Spleen (tissue), 13 donors: ENCODE measurements at regions of chr19 and their contacts with region 1.

Region 1: GRCh38 chr19:1189419-1189818 is 15.4 kb upstream of the SBNO2 start:
- DNase-seq: no peak
- H3K4me3 ChIP-seq: no peak overlapping the region
- H3K27ac ChIP-seq: peak overlapping the region in 3 of 8 donors; percentile 10 to 50 (median 37)
- H3K4me1 ChIP-seq: peaks cover 0 to 55% (median 20%) of the 10 kb centered on the region in 6 donors
- H3K27me3 ChIP-seq: no peaks in the 10 kb centered on the region
- CTCF ChIP-seq: no peak
- POLR2A ChIP-seq: no peak

Region 2: DNA sequence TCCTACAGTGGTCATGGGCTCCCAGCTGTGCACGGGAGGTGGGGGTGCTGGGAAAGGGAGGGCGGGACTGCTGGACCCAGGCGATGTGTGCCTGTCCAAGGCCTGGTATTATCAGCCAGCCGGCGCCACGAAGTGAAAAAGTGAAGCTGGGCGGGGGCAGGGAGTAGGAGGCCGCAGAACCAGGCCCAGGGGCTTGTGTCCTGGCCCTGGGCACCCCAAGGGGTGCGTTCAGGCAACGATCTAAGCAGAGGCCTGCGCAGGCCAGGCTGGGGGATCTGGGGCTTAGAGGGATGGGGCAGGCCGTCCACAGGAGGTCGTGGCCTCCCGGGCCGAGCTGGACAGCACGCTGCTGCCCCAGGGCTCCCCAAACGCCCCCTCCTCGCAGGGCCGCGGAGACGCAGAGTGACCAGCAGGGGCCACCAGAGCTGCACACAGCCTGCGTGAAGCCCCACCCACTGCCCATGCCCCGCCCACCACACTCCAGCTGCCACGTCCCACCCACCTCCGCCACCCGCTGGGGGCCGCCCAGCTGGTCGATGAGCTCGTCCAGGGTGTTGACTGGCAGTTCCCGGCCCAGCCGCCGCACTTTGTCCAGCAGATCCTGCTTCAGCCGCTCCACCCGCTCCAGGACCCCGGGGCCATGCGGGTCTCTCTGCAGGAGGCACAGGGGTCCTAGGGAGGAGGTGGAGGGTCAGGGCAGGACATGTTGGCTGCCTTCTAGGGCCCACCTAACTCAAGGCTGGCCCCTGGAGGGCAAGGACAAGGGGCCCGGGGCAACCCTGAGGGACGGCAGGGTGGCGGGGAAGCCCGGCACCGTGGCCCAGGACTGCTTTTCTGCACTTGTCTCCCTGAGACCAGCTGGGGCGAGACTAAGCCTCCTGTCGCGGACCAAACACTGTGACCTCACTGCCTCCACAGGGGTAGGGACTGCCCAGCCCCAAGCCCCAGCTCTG is 76.1 kb before region 1 on chr19:
- intact Hi-C with region 1: loop called (anchors 5 kb)
- DNase-seq: peak; percentile 96
- H3K4me3 ChIP-seq: peak overlapping the region in 1 of 8 donors; percentile 39
- H3K27ac ChIP-seq: peak overlapping the region in 7 of 8 donors; percentile 71 to 85 (median 81)
- H3K4me1 ChIP-seq: peaks cover 12 to 60% (median 25%) of the 10 kb centered on the region in 6 donors
- H3K27me3 ChIP-seq: no peaks in the 10 kb centered on the region
- CTCF ChIP-seq: peak; percentile 65 to 96 (median 93)
- POLR2A ChIP-seq: no peak